ENCODE measurements at regions of chr15 and their contacts with region 1.

Region 1: DNA sequence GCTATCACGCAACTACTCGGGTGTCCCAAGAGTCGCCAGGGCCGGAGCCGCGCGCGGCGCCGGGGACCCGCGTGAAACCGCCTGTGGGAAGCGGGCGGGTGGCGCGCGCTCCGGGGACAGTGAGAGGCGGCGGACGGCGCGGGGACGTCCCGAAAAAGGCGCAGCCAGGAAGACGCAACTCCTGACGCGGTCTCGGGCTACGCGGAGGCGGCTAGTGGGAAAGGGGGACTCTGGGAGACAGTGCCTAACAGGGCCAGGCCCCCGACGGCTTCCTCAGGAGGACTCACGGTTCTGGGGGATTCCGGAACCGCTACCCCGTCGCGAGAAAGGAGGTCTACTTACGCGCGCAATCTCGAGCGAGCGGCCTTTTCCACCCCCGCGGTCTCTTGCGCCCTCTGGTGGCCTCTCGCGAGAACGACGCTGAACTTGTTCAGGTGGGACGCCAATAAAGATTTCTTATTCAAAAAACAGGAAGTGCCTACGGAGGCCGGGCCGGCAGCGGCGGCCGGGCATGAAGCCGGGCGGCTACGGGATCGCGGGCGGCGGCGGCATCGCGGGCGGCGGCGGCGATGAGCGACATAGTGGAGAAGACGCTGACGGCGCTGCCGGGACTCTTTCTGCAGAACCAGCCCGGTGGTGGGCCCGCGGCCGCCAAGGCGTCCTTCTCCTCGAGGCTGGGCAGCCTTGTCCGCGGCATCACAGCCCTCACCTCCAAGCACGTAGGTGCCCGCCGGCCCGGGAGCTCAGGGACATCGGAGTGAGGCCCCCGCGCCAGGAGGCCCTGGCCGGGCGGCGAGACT is at the start of gene AP4E1:
- DNase-seq: peak; percentile 90
- H3K4me3 ChIP-seq: peak within 1 kb of the TSS; percentile 63 to 91 (median 81)
- H3K27ac ChIP-seq: peak within 1 kb of the TSS; percentile 87
- H3K4me1 ChIP-seq: peaks cover 24% of the 10 kb centered on the region
- H3K27me3 ChIP-seq: no peaks in the 10 kb centered on the region
- CTCF ChIP-seq: peak; percentile 84 to 95
- total RNA-seq, gene AP4E1: 21.3 to 21.4 TPM

Region 2: GRCh38 chr15:50145451-50145872 is 762.9 kb before region 1 on chr15:
- CTCF ChIA-PET with region 1: no interaction called
- dilution Hi-C with region 1: no loop called
- in situ Hi-C with region 1: loop called in 1 of 2 experiments (anchors 25 kb)
- intact Hi-C with region 1: loop called (anchors 1 kb)
- DNase-seq: peak; percentile 63
- H3K4me3 ChIP-seq: no peak overlapping the region
- H3K27ac ChIP-seq: no peak overlapping the region
- H3K4me1 ChIP-seq: peaks cover 10% of the 10 kb centered on the region
- H3K27me3 ChIP-seq: no peaks in the 10 kb centered on the region
- CTCF ChIP-seq: peak; percentile 33 to 48

Region 3: DNA sequence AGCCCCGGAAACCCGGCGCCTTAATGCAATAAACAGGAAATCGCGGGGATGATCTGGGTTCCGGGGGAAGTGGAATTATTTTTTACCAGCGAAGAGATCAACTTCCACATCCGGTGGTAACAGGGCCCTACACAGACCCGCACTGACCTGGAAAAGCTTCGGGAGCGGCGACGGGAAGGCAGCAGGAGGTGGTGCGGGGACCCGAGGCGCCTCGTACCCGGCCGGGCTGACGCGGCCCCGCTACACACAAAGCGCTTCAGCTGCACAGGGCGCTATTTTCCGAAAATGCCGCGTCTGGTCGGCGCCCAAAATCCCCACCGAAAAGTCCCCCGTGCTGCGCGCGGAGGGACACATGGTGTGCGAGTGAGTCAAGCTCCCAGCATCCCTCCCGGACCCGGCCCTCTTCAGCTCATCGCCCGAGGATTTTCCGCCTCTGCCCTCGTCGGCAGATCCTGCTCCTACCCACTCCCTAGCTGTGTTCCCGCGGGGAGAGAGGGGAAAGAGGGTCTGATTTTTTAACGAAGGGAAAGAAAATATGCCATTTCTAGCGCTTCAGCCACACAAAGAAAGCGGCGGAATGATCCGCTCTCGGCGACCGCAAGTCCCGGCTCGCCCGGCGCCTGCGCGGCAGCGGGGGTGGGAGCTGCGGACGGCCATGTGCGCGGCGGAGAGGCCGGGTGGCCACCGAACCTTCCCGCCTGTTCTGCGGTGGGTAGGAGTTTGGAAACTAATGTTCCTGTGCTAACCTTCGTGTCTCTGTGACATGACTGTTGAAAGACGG is 553.4 kb before region 1 on chr15 and contains the start of gene GABPB1:
- CTCF ChIA-PET with region 1: no interaction called
- dilution Hi-C with region 1: no loop called
- in situ Hi-C with region 1: no loop called
- intact Hi-C with region 1: loop called (anchors 2 kb)
- DNase-seq: peak; percentile 95
- H3K4me3 ChIP-seq: peak within 1 kb of the TSS; percentile 74 to 91 (median 81)
- H3K27ac ChIP-seq: peak within 1 kb of the TSS; percentile 100
- H3K4me1 ChIP-seq: peaks cover 7% of the 10 kb centered on the region
- H3K27me3 ChIP-seq: no peaks in the 10 kb centered on the region
- CTCF ChIP-seq: no peak
- total RNA-seq, gene GABPB1: 21.1 to 38.7 TPM

Region 4: DNA sequence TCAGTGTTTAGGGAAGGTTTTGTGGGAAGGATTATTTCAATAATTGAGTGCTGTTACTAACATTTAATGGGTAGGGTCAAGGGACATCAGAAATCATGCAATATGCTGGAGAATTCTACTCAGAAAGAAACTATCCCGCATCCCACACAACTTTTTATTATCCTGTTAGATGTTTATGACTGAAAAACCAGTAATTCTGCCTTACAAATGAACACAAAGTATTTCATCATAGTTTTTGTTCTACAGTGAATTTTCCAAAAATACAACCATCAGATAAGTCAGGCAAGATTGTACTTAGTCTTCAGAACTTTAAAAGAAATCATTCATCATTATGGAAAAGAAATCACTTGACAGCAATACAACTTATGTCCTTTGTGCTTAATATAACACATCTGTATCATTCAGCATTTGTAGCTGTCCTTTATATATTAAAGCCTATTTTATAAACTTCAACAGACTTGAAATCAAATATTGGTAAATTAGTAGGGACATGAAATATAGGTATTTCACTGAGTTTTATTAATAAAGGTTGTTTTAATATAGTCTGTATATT is 283.7 kb before region 1 on chr15:
- CTCF ChIA-PET with region 1: no interaction called
- dilution Hi-C with region 1: no loop called
- in situ Hi-C with region 1: no loop called
- intact Hi-C with region 1: loop called (anchors 5 kb)
- DNase-seq: no peak
- H3K4me3 ChIP-seq: no peak overlapping the region
- H3K27ac ChIP-seq: no peak overlapping the region
- H3K4me1 ChIP-seq: no peaks in the 10 kb centered on the region
- H3K27me3 ChIP-seq: no peaks in the 10 kb centered on the region
- CTCF ChIP-seq: no peak

Region 5: DNA sequence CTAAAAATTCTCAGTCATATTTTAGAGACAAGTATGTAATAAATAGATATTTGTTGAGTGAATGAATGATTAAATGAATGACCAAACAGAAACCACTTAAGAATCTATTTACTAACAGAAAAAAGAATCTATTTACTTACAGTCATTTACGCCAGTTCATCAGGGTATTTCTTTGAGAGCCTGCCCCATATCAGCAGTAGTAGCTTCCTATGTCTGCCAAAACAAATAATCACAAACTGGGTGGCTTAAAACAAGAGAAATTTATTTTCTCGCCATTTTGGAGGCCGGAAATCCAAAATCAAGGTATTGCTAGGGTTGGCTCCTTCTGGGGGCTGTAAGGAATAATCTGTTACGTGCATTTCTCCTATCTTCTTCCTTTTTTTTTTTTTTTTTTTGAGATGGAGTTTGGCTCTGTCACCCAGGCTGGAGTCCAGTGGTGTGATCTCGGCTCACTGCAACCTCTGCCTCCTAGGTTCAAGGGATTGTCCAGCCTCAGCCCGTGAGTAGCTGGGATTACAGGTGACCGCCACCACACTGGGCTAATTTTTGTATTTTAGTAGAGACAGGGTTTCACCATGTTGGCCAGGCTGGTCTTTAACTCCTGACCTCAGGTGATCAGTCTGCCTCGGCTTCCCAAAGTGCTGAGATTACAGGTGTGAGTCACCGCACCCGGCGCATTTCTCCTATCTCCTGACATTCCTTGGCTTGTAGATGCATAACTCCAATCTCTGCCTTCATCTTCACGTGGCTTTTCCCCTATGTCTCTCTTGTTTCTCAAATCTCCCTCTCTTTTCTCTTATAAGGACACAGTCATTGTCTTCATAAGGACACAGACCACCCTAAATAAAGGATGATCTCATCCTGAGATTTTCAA is 77.7 kb before region 1 on chr15:
- CTCF ChIA-PET with region 1: no interaction called
- dilution Hi-C with region 1: no loop called
- in situ Hi-C with region 1: no loop called
- intact Hi-C with region 1: no loop called
- DNase-seq: no peak
- H3K4me3 ChIP-seq: no peak overlapping the region
- H3K27ac ChIP-seq: no peak overlapping the region
- H3K4me1 ChIP-seq: peaks cover 10% of the 10 kb centered on the region
- H3K27me3 ChIP-seq: no peaks in the 10 kb centered on the region
- CTCF ChIP-seq: no peak

Region 6: DNA sequence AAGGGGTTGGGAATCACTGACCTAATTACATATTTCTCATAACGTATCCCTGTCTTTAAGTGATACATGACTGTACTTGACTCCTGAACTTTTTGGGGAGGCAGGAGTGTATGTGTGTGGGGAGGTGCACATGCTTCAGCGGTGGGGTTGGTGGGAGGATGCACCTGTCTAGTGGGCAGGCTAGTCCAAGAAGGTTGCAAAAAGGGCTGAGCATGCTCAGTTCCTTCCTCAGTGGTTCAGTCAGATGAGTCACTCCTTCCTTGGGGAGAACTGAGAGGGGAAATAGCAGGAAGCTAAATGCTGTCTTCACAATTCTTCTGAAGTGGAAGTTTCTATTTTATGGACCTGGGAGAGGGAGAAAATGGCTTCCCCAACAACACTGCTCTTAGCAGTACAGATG is 24.5 kb before region 1 on chr15:
- CTCF ChIA-PET with region 1: interaction called, 24 read pairs
- dilution Hi-C with region 1: no loop called
- in situ Hi-C with region 1: no loop called
- intact Hi-C with region 1: loop called (anchors 1 kb)
- DNase-seq: peak; percentile 74
- H3K4me3 ChIP-seq: no peak overlapping the region
- H3K27ac ChIP-seq: peak overlapping the region; percentile 97
- H3K4me1 ChIP-seq: peaks cover 43% of the 10 kb centered on the region
- H3K27me3 ChIP-seq: no peaks in the 10 kb centered on the region
- CTCF ChIP-seq: no peak